PC-9 (cell line): ENCODE measurements at regions of chr11 and their contacts with region 1.

Region 1: GRCh38 chr11:9506489-9507276 is 45.9 kb downstream of the ZNF143 start:
- DNase-seq: peak; percentile 49 to 62
- H3K4me3 ChIP-seq: no peak overlapping the region
- H3K27ac ChIP-seq: 0 out of 2 replicates have a peak overlapping the region, but pooled peaks have one; percentile 13
- H3K4me1 ChIP-seq: no peaks in the 10 kb centered on the region
- H3K27me3 ChIP-seq: no peaks in the 10 kb centered on the region
- CTCF ChIP-seq: peak; percentile 84

Region 2: GRCh38 chr11:8384199-8384821 is 1122.4 kb before region 1 on chr11:
- CTCF ChIA-PET with region 1: no interaction called
- POLR2A ChIA-PET with region 1: no interaction called
- intact Hi-C with region 1: loop called (anchors 5 kb)
- DNase-seq: peak in 1 of 2 experiments; percentile 47
- H3K4me3 ChIP-seq: no peak overlapping the region
- H3K27ac ChIP-seq: no peak overlapping the region
- H3K4me1 ChIP-seq: no peaks in the 10 kb centered on the region
- H3K27me3 ChIP-seq: no peaks in the 10 kb centered on the region
- CTCF ChIP-seq: 0 out of 2 replicates have a peak, but pooled peaks have one; percentile 29

Region 3: GRCh38 chr11:9160166-9160565 is 346.5 kb before region 1 on chr11:
- CTCF ChIA-PET with region 1: interaction called, 3 read pairs
- POLR2A ChIA-PET with region 1: no interaction called
- intact Hi-C with region 1: loop called (anchors 10 kb)
- DNase-seq: no peak
- H3K4me3 ChIP-seq: no peak overlapping the region
- H3K27ac ChIP-seq: 0 out of 2 replicates have a peak overlapping the region, but pooled peaks have one; percentile 7
- H3K4me1 ChIP-seq: peaks cover 7% of the 10 kb centered on the region; the same call in 1 of the 2 replicates
- H3K27me3 ChIP-seq: no peaks in the 10 kb centered on the region
- CTCF ChIP-seq: no peak

Region 4: DNA sequence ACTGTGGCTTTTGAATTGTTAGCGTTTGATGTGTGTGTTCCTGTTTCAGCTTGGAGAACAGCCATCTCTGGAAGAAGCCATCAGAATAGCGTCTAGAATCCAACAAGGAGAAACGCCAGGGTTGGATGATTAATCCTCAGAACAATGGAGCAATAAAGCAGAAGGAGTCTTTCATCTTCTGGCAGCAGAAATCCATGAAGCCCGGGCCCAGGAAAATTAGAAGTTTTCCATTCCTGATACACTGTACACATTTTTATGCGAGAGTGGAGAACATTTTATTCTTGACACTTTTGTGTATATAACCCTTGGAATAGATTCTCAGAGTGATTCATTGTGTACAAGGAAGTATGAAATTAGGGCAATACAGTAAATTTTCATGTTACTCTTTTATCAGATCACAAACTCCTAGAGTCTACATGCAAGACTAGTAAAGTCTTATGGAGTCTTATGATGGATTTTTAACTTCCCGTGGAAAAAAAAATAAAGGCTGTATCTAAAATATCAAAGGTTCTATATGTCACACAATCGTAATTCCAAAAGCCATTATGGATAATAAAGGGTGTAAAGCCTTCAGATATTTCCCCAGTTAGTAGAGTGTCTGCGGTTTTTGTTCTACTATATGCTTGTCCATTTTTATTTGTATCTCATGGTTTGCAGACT is 20.9 kb after region 1 on chr11:
- CTCF ChIA-PET with region 1: no interaction called
- POLR2A ChIA-PET with region 1: no interaction called
- intact Hi-C with region 1: no loop called
- DNase-seq: peak in 1 of 2 experiments; percentile 67
- H3K4me3 ChIP-seq: no peak overlapping the region
- H3K27ac ChIP-seq: peak overlapping the region; percentile 85
- H3K4me1 ChIP-seq: peaks cover 53% of the 10 kb centered on the region
- H3K27me3 ChIP-seq: no peaks in the 10 kb centered on the region
- CTCF ChIP-seq: no peak